Dendritic cell treated with granulocyte-macrophage colony-stimulating factor and Interleukin-4, amounts not matched to agents 40 ng/mL and 50 ng/mL, for 4 days (primary cell): ENCODE measurements at regions of chr3 and their contacts with region 1.

Region 1: GRCh38 chr3:69439643-69440270 is 53.9 kb upstream of the FRMD4B start:
- H3K4me3 Mint-ChIP-seq: peak overlapping the region; percentile 23
- H3K27ac Mint-ChIP-seq: peak overlapping the region; percentile 67
- H3K4me1 Mint-ChIP-seq: peaks cover 44% of the 10 kb centered on the region
- H3K27me3 Mint-ChIP-seq: no peaks in the 10 kb centered on the region

Region 2: GRCh38 chr3:69499899-69500421 is 60.2 kb after region 1 on chr3:
- intact Hi-C with region 1: loop called (anchors 5 kb)
- H3K4me3 Mint-ChIP-seq: peak overlapping the region; percentile 17
- H3K27ac Mint-ChIP-seq: peak overlapping the region; percentile 87
- H3K4me1 Mint-ChIP-seq: peaks cover 59% of the 10 kb centered on the region
- H3K27me3 Mint-ChIP-seq: no peaks in the 10 kb centered on the region